ENCODE measurements at regions of chr21 and their contacts with region 1.

Region 1: DNA sequence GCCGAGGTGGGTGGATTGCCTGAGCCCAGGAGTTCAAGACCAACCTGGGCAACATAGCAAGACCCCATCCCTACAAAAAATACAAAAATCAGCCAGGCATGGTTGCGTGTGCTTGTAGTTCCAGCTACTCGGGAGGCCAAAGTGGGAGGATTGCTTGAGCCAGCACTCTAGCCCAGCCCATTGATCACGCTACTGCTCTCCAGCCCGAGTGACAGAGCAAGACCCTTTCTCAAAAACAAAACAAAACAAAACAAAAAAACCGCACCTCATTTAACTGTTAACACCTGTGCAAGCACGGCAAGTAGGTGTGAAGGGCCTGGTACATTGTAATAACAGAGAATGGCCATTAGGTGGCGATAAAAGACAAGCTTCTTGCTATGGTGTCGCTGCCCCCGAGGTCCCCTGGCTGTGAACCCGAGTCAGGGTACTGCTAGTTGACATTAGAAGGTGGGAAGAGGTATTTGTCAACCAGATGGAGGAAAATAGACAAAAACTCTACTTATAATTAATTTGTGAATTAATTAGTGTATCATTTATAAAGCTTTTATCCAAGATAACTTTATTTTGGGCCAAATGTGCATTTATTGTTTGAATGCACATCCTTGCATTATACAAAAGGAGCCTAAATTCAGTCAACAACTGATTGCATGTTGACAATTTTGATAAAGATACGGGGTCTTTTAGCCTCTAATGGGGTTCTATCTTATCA is 66.5 kb downstream of the SH3BGR start:
- H3K4me3 ChIP-seq: no peak overlapping the region
- H3K27ac ChIP-seq: no peak overlapping the region
- H3K4me1 ChIP-seq: peaks cover 3% of the 10 kb centered on the region; the same call in 1 of the 2 replicates
- CTCF ChIP-seq: peak; percentile 91

Region 2: DNA sequence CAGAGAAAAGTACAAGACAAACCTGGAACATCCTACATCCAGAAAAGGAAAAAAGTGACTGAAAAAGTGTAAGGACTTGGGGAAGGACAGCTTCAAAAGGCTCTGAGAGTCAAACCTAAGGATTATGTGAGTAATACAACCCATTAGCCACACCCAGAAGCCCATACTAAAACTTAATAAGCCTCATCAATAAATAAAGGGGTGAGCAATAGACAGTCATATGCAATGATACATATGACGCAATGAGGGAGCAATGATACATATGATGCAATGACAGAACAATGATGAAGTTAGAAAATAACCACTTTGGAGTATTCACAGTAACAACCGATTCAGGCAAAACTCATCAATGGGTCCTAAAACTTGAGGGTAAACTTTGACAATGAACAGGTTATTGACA is 254.9 kb before region 1 on chr21:
- CTCF ChIA-PET with region 1: no interaction called
- POLR2A ChIA-PET with region 1: no interaction called
- H3K4me3 ChIP-seq: no peak overlapping the region
- H3K27ac ChIP-seq: no peak overlapping the region
- H3K4me1 ChIP-seq: peaks cover 6% of the 10 kb centered on the region
- CTCF ChIP-seq: no peak

Region 3: DNA sequence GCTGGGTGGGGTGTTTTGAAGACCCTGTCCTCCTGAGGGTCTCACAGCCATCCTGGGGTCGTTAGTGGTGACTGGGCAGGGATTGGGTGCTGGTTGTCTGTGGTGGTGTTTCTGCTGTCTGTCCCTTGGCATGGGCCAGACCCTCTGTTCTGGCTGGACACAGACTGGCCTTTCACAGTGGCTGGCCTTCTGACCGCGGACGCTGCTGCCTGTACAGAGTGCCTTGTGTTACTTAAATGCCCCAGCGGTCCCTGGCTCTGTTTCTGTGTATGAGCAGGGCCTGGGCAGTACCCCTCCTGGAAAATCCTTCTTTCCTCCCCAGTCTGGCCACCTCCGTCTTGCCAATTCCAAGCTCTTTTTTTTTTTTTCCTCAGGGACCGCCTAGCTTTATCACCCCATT is 15.7 kb before region 1 on chr21:
- CTCF ChIA-PET with region 1: interaction called, 14 read pairs
- POLR2A ChIA-PET with region 1: no interaction called
- H3K4me3 ChIP-seq: no peak overlapping the region
- H3K27ac ChIP-seq: no peak overlapping the region
- H3K4me1 ChIP-seq: no peaks in the 10 kb centered on the region
- CTCF ChIP-seq: no peak

Region 4: GRCh38 chr21:39612233-39613040 is 94.1 kb after region 1 on chr21 and contains the start of gene B3GALT5:
- CTCF ChIA-PET with region 1: interaction called, 12 read pairs
- POLR2A ChIA-PET with region 1: no interaction called
- H3K4me3 ChIP-seq: peak within 1 kb of the TSS; percentile 42
- H3K27ac ChIP-seq: no peak within 1 kb of the TSS
- H3K4me1 ChIP-seq: peaks cover 10% of the 10 kb centered on the region; the same call in 1 of the 2 replicates
- CTCF ChIP-seq: no peak

Region 5: DNA sequence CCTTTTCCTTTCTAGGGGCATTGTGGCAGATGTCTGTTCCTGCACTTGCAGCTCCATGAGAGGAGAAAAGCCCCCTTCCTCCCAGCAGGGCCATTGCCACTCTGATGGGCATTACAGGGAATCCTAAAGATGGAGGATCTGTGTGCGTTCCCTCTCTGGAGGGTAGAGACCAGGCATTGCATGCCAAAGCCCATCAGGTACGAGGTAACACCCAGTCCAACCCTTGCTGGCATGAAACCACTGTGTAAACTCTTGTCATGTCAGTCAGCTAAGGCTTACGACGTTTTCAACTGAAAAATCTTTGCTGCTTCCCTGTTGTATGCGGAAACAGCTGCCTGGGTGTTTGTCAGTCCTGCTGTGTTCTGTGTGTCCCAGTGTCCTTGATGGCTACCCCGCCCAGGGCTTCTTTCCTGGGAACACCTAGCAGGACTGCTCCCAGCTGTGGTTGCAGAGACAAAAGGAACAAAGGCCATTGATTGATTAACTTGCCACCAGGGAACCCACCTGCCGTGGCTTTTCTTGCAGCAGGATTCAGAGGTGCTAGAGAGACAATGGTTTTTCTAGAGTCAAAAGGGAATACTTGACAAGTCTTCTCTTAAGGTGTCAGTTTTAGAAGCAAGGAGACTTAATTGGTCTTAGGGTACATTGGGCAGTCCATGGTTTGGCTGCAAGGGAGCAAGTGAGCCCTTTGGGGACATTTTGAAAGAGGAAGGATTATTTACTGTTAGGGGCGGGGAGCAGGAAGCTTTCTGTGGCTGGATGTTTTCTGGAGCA is 119.1 kb after region 1 on chr21:
- CTCF ChIA-PET with region 1: no interaction called
- POLR2A ChIA-PET with region 1: no interaction called
- H3K4me3 ChIP-seq: no peak overlapping the region
- H3K27ac ChIP-seq: no peak overlapping the region
- H3K4me1 ChIP-seq: no peaks in the 10 kb centered on the region
- CTCF ChIP-seq: no peak

Region 6: GRCh38 chr21:39705849-39706248 is 187.6 kb after region 1 on chr21:
- CTCF ChIA-PET with region 1: interaction called, 47 read pairs
- POLR2A ChIA-PET with region 1: no interaction called
- H3K4me3 ChIP-seq: no peak overlapping the region
- H3K27ac ChIP-seq: no peak overlapping the region
- H3K4me1 ChIP-seq: no peaks in the 10 kb centered on the region
- CTCF ChIP-seq: no peak

Region 7: GRCh38 chr21:39715804-39716397 is 197.6 kb after region 1 on chr21:
- CTCF ChIA-PET with region 1: interaction called, 172 read pairs
- POLR2A ChIA-PET with region 1: no interaction called
- H3K4me3 ChIP-seq: no peak overlapping the region
- H3K27ac ChIP-seq: no peak overlapping the region
- H3K4me1 ChIP-seq: no peaks in the 10 kb centered on the region
- CTCF ChIP-seq: no peak

Region 8: GRCh38 chr21:39726132-39726727 is 207.9 kb after region 1 on chr21:
- CTCF ChIA-PET with region 1: interaction called, 13 read pairs
- POLR2A ChIA-PET with region 1: no interaction called
- H3K4me3 ChIP-seq: no peak overlapping the region
- H3K27ac ChIP-seq: no peak overlapping the region
- H3K4me1 ChIP-seq: no peaks in the 10 kb centered on the region
- CTCF ChIP-seq: no peak

Measured in HEK293 (cell line).